ENCODE measurements at regions of chr1 and their contacts with region 1.

Region 1: DNA sequence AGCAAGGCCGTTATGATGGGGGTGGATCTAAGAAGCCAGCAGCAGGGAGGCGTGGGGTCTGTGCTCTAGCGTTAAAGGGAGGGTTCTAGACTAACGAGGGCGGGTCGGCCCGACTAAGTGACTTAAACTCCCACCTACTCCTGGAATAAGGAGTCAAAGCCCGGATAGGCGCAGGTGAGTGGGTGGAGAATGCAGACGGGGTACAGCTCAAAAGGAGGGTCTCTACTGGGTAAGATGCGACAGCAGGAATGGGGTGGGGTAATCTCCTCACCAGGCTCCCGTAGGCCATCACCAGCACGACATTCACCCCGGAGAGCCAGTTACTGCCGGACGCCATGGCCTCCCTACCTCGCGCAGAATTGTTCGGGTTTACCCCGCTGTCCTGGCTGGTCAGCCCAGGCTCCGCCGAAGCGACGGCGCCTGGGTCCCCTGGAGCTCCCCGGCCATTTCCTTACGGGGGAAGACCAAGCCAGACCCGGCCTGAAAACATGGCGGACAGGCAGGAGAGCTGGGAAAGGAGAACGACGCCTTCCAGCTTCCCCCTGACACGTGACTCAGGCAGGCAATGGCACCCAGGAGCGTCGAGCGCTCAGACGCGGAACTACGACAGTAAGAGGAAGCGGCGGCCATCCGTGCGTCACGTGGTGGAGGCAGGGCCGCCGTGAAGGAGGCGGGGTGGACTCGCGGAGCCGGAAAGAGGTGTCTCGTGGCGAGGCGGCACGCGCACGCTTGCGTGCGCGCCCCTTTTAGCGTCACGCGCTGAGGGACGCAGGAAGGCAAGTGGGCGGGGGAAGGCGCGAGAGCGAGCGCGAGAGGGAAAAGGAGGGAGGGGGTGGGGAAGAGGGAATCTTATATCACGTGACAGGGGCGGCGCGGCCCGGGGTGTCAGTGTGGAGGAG is at the start of gene UBAP2L:
- DNase-seq: peak; percentile 100
- H3K4me3 ChIP-seq: peak within 1 kb of the TSS; percentile 65 to 93 (median 90)
- H3K27ac ChIP-seq: peak within 1 kb of the TSS; percentile 93
- H3K4me1 ChIP-seq: peaks cover 25% of the 10 kb centered on the region
- H3K27me3 ChIP-seq: no peaks in the 10 kb centered on the region
- CTCF ChIP-seq: no peak
- POLR2A ChIP-seq: peak; percentile 87
- total RNA-seq, gene UBAP2L: 229 and 235 TPM in 2 replicates

Region 2: DNA sequence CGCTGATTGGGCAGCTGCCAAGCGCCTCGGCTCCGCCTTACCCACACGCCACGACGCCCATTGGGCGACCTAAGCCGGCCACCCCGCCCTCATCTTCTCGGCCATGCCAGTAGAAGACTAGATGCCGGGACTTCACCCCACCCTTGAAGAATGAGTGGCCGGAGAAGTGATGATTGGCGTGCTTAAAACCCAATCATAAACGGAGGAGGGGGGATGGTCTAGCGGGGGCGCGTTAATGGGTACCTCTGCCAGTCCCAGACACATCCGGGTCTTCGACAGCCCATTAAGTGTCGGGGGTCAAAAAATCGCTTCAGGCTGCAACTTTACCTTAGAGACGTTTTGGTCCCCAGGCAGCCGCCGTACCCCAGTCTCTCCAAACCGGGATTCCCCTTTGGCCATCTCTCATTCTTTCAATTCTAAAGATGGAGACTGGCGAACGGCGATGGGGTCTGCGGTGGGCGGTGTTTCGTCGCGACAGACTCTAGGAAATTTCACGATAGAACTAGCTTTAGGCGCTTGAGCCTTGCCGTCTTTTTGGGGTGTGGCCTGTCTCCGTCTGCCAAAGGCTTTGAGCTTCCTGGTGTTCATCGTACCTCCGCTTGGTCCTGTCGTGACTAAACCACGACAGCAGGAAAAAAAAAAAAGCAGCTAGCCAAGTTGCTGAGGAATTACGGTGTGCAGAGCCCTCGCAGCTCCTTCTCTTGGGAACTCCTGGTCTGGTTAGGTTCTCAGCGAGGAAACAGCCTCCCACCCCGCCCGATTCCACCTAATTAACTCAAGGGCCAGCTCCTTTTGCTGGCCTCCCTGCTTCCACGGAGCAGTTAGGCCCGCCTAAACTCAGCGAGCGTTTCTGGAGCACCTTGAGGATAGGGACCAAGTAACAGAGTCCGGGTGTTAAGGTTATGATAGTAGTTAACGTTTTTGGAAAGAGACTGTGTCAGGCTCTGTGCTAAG is 297.1 kb before region 1 on chr1 and contains the start of gene GATAD2B:
- CTCF ChIA-PET with region 1: no interaction called
- POLR2A ChIA-PET with region 1: no interaction called
- dilution Hi-C with region 1: no loop called
- intact Hi-C with region 1: loop called (anchors 1 kb)
- DNase-seq: peak; percentile 100
- H3K4me3 ChIP-seq: peak within 1 kb of the TSS; percentile 68 to 91 (median 85)
- H3K27ac ChIP-seq: peak within 1 kb of the TSS; percentile 60
- H3K4me1 ChIP-seq: peaks cover 24% of the 10 kb centered on the region
- H3K27me3 ChIP-seq: no peaks in the 10 kb centered on the region
- CTCF ChIP-seq: no peak
- POLR2A ChIP-seq: peak; percentile 80
- total RNA-seq, gene GATAD2B: 46.3 and 49.2 TPM in 2 replicates

Region 3: DNA sequence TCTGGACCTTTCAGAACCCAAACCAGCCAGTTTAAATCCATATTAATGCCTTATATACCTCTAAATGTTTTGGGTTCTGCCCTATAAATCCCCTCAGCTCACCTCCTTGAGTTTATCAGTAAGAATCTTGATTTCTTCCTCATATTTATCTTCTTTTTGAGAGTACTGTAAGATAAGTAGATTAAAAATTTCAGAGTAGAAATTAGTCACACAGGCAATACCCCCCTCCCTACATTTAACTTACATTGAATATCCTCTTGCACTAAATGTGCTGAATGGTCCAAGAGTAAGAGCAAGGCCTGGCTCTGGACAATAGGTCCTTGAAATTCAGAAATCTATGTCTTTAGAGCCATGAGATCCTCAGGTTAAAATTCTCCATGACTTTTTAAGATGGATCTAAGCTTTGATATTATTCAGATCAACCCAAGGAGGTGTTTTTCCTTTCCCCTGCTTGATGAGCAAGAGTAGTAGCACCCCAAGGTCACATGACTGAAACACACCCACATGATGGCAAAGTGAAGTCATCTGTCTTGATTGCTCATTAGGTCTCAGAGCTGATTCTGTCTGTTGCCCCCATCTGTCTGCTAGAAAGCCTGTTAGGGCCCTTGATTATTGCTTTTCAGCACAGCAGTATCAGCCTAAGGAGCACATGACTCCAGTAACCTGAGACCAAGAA is 49.6 kb before region 1 on chr1:
- CTCF ChIA-PET with region 1: no interaction called
- POLR2A ChIA-PET with region 1: no interaction called
- dilution Hi-C with region 1: no loop called
- intact Hi-C with region 1: no loop called
- DNase-seq: no peak
- H3K4me3 ChIP-seq: no peak overlapping the region
- H3K27ac ChIP-seq: no peak overlapping the region
- H3K4me1 ChIP-seq: peaks cover 2% of the 10 kb centered on the region
- H3K27me3 ChIP-seq: no peaks in the 10 kb centered on the region
- CTCF ChIP-seq: no peak
- POLR2A ChIP-seq: no peak

Region 4: GRCh38 chr1:154183045-154183915 is 37.0 kb before region 1 on chr1:
- CTCF ChIA-PET with region 1: no interaction called
- POLR2A ChIA-PET with region 1: interaction called, 3 read pairs
- dilution Hi-C with region 1: no loop called
- intact Hi-C with region 1: loop called (anchors 1 kb)
- DNase-seq: peak; percentile 95
- H3K4me3 ChIP-seq: peak overlapping the region; percentile 87 to 99 (median 93)
- H3K27ac ChIP-seq: peak overlapping the region; percentile 64
- H3K4me1 ChIP-seq: peaks cover 30% of the 10 kb centered on the region
- H3K27me3 ChIP-seq: peaks cover 0 to 3% of the 10 kb centered on the region in 2 experiments
- CTCF ChIP-seq: no peak
- POLR2A ChIP-seq: peak; percentile 72

Region 5: DNA sequence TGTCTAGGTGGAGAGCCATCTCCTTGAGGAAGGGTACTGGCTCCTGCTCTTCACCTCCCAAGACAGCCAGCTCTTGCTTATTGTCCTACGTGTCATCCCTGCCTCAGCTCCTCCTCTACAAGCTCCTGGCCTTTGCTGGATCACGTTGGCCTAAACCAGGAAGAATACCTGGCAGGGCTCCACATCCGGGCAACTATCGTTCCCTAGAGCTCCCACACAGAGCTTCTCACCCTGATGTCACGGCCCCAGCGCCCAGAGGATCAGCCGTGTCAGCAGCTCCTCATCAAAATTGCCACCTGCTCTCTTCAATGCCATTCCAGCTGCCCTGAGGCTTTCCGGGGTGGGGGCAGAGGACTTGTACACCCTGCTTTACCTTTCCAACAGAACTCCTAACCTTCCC is 26.5 kb before region 1 on chr1:
- CTCF ChIA-PET with region 1: interaction called, 25 read pairs
- POLR2A ChIA-PET with region 1: interaction called, 6 read pairs
- dilution Hi-C with region 1: no loop called
- intact Hi-C with region 1: loop called (anchors 1 kb)
- DNase-seq: no peak
- H3K4me3 ChIP-seq: no peak overlapping the region
- H3K27ac ChIP-seq: no peak overlapping the region
- H3K4me1 ChIP-seq: peaks cover 23% of the 10 kb centered on the region
- H3K27me3 ChIP-seq: peaks cover 10 to 14% of the 10 kb centered on the region in 2 experiments
- CTCF ChIP-seq: no peak
- POLR2A ChIP-seq: no peak

Region 6: GRCh38 chr1:154198756-154199562 is 21.4 kb before region 1 on chr1:
- CTCF ChIA-PET with region 1: interaction called, 25 read pairs
- POLR2A ChIA-PET with region 1: interaction called, 9 read pairs
- dilution Hi-C with region 1: no loop called
- intact Hi-C with region 1: no loop called
- DNase-seq: peak; percentile 78
- H3K4me3 ChIP-seq: no peak overlapping the region
- H3K27ac ChIP-seq: no peak overlapping the region
- H3K4me1 ChIP-seq: no peaks in the 10 kb centered on the region
- H3K27me3 ChIP-seq: peaks cover 3 to 4% of the 10 kb centered on the region in 2 experiments
- CTCF ChIP-seq: peak; percentile 31 to 56
- POLR2A ChIP-seq: no peak

Region 7: DNA sequence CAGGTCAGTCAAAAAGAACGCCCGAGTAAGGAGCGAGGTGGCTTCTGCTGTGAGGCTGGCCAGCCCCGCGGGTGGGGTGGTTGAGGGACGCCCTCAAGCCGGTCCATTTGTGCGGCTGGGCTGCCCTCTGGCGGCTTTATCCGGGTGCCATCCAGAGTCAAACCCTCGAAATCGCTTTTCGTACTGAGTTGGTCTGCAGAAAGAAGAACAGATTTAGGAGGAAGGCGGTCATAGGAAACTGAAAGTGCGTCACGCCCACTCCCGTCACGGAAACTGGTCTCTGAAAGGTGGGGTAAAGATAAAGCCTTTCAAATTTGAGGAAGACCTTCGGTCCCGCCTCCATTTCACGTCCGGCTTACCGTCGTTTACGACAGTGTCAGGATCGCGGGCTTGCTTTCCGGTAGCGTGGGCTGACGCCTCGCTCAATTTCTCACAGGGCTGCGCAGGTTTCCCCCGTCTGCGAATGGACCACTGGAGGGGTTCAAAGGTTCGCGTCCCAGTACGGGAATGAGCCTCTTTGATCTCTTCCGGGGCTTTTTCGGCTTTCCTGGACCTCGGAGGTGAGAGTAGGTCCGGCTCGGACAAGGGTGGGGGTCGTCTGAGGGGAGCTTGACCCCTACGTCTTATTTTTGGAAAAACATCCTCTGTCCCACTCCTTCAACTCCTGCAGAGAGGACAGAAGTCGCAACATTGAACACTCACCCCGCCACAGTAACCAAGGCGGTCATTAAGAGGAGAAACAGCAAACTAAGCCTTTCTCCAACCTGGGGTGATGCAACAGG is 52.1 kb after region 1 on chr1 and contains the start of gene HAX1:
- CTCF ChIA-PET with region 1: interaction called, 3 read pairs
- POLR2A ChIA-PET with region 1: no interaction called
- dilution Hi-C with region 1: no loop called
- intact Hi-C with region 1: loop called (anchors 2 kb)
- DNase-seq: peak; percentile 97
- H3K4me3 ChIP-seq: peak within 1 kb of the TSS; percentile 79 to 91 (median 81)
- H3K27ac ChIP-seq: peak within 1 kb of the TSS; percentile 69
- H3K4me1 ChIP-seq: peaks cover 15% of the 10 kb centered on the region
- H3K27me3 ChIP-seq: no peaks in the 10 kb centered on the region
- CTCF ChIP-seq: peak; percentile 81
- POLR2A ChIP-seq: peak; percentile 71
- total RNA-seq, gene HAX1: 69.1 and 78.4 TPM in 2 replicates

Region 8: GRCh38 chr1:154324669-154325582 is 104.6 kb after region 1 on chr1 and contains the start of gene ATP8B2:
- CTCF ChIA-PET with region 1: no interaction called
- POLR2A ChIA-PET with region 1: no interaction called
- dilution Hi-C with region 1: no loop called
- intact Hi-C with region 1: loop called (anchors 1 kb)
- DNase-seq: peak; percentile 79
- H3K4me3 ChIP-seq: peak within 1 kb of the TSS; percentile 78 to 88 (median 85)
- H3K27ac ChIP-seq: peak within 1 kb of the TSS; percentile 52
- H3K4me1 ChIP-seq: peaks cover 22% of the 10 kb centered on the region
- H3K27me3 ChIP-seq: peaks cover 0 to 8% of the 10 kb centered on the region in 2 experiments
- CTCF ChIP-seq: peak; percentile 93 to 94
- POLR2A ChIP-seq: no peak
- total RNA-seq, gene ATP8B2: 60.0 and 64.7 TPM in 2 replicates

Measured in endothelial cell of umbilical vein (primary cell).